ENCODE measurements at regions of chr3 and their contacts with region 1.

Region 1: DNA sequence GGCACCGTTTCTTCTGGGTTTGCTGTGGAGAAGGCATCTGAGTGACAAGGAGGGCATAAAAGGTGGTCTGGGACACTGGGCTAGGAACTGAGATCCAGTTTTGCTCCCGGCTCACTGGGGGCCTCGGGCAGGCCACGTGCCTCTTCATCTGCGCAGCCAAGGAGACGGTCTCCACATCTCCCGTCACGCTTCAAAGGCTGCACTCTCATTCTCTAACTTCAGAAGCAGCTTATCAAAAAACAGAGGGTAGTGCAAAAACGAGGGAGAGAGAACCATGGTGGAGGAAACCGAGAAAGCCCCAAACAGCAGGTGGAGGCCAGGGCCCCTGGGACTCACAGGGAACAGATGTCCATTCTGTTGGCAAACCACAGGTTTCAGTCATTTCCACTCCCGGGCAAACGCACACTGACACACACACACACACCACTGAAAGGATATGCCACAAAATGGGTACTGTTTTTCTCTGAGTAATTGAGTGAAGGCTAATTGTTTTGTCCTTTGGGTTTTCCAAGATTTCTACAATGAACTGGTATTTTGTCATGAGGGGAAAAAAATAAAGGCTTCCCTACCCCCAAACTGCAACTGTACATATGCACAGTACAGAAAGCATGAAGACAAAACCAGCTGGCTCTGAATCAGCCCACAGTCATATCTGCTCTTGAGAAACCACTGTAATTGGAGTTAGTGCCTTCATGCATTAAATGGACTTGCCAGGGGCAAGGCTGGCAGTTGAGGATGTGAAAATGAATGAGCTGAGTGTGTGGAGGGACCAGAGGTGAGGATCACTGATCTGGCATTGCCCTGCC is 71.9 kb downstream of the MGLL start:
- DNase-seq: peak; percentile 48
- H3K4me3 ChIP-seq: no peak overlapping the region
- H3K27me3 ChIP-seq: no peaks in the 10 kb centered on the region
- CTCF ChIP-seq: no peak

Region 2: DNA sequence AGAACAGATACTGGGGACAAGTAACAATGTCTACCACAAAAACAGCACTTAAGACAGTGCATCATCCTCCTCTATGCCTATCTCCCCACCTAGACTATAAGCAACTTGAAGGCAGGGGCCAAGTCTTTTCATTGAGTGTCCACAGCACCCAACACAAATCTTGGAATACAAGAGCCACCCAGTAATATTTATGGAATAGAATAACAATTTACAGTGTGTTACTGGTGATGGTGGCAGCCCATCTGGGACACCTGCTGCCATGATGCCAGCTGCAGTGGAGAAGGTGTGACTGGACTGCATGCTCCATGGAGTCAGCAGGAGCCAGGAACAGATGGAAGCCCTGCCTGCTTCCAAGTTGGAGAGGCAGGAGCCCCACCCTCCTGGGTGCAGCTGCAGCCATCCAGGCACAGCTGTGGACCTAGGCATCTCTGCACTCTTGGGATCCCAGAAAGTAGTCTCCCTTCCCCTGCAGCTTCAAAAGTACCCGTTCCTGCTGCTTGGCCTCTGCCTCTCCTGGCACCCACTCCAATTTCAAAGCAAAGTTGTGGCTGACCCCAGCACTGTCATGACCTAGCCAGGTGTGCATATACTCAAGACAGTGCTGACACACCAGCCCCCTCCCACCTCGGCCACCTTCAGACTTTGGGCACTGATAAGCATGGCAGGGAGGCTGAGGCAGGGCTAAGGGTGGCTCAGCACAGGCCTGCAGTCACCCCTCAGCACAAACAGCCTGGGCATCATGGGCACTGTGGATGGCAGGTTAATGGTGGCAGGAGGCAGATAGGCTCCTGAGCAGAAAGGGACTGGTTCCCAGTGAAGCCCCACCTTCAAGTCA is 254.4 kb before region 1 on chr3:
- CTCF ChIA-PET with region 1: no interaction called
- POLR2A ChIA-PET with region 1: no interaction called
- DNase-seq: no peak
- H3K4me3 ChIP-seq: no peak overlapping the region
- H3K27me3 ChIP-seq: peaks cover 2% of the 10 kb centered on the region
- CTCF ChIP-seq: no peak

Region 3: DNA sequence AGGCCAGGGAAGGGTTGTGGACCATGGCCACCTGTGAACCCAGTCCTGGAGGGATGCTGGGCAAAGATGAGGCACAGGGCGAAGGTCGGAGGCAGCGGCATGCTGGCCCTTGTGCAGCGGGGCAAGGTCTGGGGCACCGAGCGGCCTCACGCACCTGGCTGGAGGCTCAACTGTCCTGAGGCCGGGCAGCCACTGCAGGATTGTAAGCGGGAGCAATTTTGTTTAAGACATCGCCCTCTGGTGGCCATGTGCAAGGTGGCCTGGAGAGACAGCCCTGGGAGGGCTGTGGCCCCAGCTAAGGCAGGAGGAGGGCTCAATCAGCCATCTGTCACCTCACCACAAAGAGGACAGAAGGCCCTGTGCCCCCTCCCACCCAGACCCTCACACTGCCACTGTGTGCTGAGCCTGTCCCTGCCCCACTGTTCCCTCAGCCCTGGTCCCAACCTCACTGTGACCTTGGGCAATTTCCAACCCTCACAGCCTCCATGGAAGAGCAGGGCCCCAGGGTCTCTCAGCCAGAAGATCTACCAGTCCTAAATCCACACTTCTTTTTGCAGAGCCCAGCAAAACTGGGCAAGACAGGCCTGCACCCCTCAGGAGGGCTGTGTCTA is 206.1 kb before region 1 on chr3:
- CTCF ChIA-PET with region 1: no interaction called
- POLR2A ChIA-PET with region 1: no interaction called
- DNase-seq: no peak
- H3K4me3 ChIP-seq: no peak overlapping the region
- H3K27me3 ChIP-seq: peaks cover 1% of the 10 kb centered on the region; the same call in 1 of the 2 replicates
- CTCF ChIP-seq: peak; percentile 87

Region 4: DNA sequence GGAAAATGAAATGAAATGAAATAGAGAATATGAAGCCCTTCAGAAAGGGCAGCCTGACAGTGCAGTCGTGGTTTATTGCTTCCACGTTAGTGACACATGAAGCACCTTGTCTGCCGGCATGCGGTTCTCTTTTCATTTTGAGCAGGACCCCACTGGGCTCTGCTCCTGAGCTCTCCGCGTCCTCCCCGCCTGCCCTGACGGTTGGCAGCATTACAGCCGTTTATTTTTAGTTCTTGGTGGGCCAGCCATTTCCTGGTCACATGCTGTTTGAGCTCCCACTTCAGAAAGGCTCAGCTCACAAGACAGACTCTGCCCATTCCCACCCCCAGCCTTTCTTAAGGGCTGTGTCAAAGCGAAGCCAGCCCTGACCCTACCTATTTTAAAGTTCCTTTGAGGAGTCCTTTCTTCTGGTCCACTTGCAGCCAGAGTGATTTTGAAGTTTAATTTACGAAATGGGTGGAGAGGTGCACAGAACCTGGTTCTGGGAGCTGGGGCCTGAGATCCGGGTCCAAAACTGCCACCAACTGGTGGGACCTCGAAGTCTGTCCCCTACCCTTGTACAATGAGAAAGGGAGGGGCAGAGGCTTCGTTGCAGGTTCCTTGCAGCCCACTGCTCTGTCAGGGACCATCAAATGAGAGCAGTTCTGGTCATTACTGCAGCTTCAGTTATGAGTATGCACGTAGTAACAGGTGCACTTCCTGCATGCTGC is 11.8 kb after region 1 on chr3:
- CTCF ChIA-PET with region 1: interaction called, 45 read pairs
- POLR2A ChIA-PET with region 1: no interaction called
- DNase-seq: no peak
- H3K4me3 ChIP-seq: no peak overlapping the region
- H3K27me3 ChIP-seq: no peaks in the 10 kb centered on the region
- CTCF ChIP-seq: no peak

Region 5: DNA sequence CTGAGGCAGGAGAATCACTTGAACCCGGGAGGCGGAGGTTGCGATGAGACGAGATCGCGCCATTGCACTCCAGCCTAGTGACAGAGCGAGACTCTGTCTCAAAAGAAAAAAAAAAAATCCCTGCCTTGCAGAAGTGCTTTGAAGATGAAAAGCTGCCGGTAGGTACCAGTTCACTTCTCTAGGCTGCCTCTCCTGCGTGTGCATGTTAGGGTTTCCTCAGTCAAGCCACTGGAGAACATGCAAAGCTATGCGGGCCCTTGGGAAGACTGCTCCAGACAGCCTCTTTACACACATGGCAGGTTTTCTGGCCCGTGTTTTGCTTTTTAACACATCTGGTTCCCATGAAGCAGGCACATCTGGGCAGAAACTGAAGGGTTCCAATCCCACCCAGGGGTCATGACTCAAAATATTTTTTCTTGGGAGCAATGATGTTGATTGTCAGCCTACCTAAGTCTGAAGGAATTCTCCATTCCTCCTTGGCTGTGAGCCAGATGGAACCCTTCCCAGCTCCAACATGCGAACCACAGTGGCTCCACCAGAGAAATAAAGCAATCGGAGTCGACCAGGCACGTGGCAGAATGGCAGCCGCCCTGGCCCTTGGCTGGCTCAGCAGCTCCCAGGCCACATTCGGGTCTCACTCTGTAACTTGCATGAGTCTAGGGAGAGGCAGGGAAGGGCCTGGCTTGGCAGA is 42.3 kb after region 1 on chr3:
- CTCF ChIA-PET with region 1: no interaction called
- POLR2A ChIA-PET with region 1: interaction called, 10 read pairs
- DNase-seq: peak; percentile 94
- H3K4me3 ChIP-seq: no peak overlapping the region
- H3K27me3 ChIP-seq: no peaks in the 10 kb centered on the region
- CTCF ChIP-seq: no peak

Measured in BJ (cell line).